ENCODE measurements at regions of chr5 and their contacts with region 1.

Region 1: GRCh38 chr5:141618804-141619554 is at the start of gene DIAPH1:
- DNase-seq: peak; percentile 99
- H3K4me3 ChIP-seq: peak within 1 kb of the TSS; percentile 92
- H3K27ac ChIP-seq: peak within 1 kb of the TSS; percentile 90
- H3K4me1 ChIP-seq: peaks cover 26% of the 10 kb centered on the region
- H3K27me3 ChIP-seq: no peaks in the 10 kb centered on the region
- CTCF ChIP-seq: peak; percentile 99
- total RNA-seq, gene DIAPH1: 105 and 109 TPM in 2 replicates

Region 2: GRCh38 chr5:141597394-141597793 is 21.6 kb before region 1 on chr5:
- CTCF ChIA-PET with region 1: interaction called, 50 read pairs
- POLR2A ChIA-PET with region 1: interaction called, 3 read pairs
- intact Hi-C with region 1: loop called (anchors 1 kb)
- DNase-seq: no peak
- H3K4me3 ChIP-seq: no peak overlapping the region
- H3K27ac ChIP-seq: no peak overlapping the region
- H3K4me1 ChIP-seq: peaks cover 3% of the 10 kb centered on the region
- H3K27me3 ChIP-seq: no peaks in the 10 kb centered on the region
- CTCF ChIP-seq: no peak

Region 3: DNA sequence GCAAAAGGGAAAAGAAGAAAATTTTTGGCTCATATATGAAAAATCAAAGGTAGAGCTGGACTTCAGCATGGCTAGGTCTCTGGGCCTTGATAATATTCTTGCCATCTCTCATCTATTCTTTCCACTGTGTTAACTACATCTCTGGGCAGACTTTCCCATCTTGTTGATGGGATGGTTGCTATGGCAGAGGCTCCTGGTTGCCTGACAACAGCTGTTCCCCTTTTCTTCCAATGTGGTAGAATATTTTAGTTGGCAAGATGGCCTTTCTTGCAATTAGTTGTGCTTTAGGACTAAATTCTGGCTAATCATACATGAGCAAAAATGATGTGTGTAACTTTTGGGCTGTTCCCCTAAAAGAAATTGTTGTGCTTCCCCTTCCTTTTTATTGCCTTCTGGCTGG is 103.3 kb after region 1 on chr5:
- CTCF ChIA-PET with region 1: no interaction called
- POLR2A ChIA-PET with region 1: no interaction called
- intact Hi-C with region 1: no loop called
- DNase-seq: no peak
- H3K4me3 ChIP-seq: no peak overlapping the region
- H3K27ac ChIP-seq: no peak overlapping the region
- H3K4me1 ChIP-seq: no peaks in the 10 kb centered on the region
- H3K27me3 ChIP-seq: no peaks in the 10 kb centered on the region
- CTCF ChIP-seq: no peak